ENCODE measurements at regions of chr9 and their contacts with region 1.

Region 1: GRCh38 chr9:84583866-84584265 is 85.7 kb upstream of the NTRK2 start:
- DNase-seq: no peak
- ATAC-seq: no peak
- H3K4me3 ChIP-seq: no peak overlapping the region
- H3K4me3 Mint-ChIP-seq: no peak overlapping the region
- H3K27ac ChIP-seq: no peak overlapping the region
- H3K27ac Mint-ChIP-seq: no peak overlapping the region
- H3K4me1 ChIP-seq: no peaks in the 10 kb centered on the region
- H3K4me1 Mint-ChIP-seq: no peaks in the 10 kb centered on the region
- H3K27me3 ChIP-seq: no peaks in the 10 kb centered on the region
- H3K27me3 Mint-ChIP-seq: no peaks in the 10 kb centered on the region
- CTCF ChIP-seq: no peak

Region 2: GRCh38 chr9:84521208-84521607 is 62.7 kb before region 1 on chr9:
- CTCF ChIA-PET with region 1: no interaction called
- POLR2A ChIA-PET with region 1: no interaction called
- intact Hi-C with region 1: no loop called
- DNase-seq: no peak
- ATAC-seq: no peak
- H3K4me3 ChIP-seq: no peak overlapping the region
- H3K4me3 Mint-ChIP-seq: no peak overlapping the region
- H3K27ac ChIP-seq: no peak overlapping the region
- H3K27ac Mint-ChIP-seq: no peak overlapping the region
- H3K4me1 ChIP-seq: no peaks in the 10 kb centered on the region
- H3K4me1 Mint-ChIP-seq: no peaks in the 10 kb centered on the region
- H3K27me3 ChIP-seq: no peaks in the 10 kb centered on the region
- H3K27me3 Mint-ChIP-seq: no peaks in the 10 kb centered on the region
- CTCF ChIP-seq: no peak

Region 3: DNA sequence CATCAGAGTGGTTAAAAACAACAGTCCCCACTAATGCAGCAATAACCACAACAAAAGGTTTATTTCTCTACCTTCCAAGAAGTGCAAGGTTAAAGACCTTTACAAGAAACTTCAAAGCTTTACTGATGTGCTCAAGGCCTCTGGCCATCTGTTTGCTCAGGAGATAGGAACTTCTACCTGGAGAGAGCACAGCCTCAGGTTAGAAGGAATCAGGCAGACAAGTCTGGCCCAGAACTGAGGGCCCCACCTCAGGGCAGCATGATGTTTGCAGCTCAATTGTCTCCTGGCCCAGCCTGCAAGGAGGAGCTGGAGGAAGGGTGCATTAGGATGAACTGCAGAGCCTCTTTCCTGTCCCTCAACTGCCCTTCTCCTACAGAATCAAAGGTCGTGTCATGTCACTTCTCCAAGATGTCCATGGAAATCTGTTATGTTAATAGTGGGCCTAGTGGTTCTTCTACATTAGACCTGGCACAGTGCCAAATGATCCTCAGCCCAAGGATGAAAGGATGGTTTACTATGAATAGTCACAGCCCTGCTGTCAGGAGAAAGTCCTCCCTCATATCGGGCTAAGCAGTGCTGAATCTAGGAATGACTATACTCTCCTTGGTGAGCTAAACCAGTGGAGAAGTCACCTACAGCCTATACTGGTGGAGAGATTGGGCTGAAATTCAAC is 13.2 kb before region 1 on chr9:
- CTCF ChIA-PET with region 1: no interaction called
- POLR2A ChIA-PET with region 1: no interaction called
- intact Hi-C with region 1: loop called in 1 of 2 experiments (anchors 1 kb)
- DNase-seq: no peak
- ATAC-seq: no peak
- H3K4me3 ChIP-seq: no peak overlapping the region
- H3K4me3 Mint-ChIP-seq: no peak overlapping the region
- H3K27ac ChIP-seq: no peak overlapping the region
- H3K27ac Mint-ChIP-seq: no peak overlapping the region
- H3K4me1 ChIP-seq: no peaks in the 10 kb centered on the region
- H3K4me1 Mint-ChIP-seq: no peaks in the 10 kb centered on the region
- H3K27me3 ChIP-seq: no peaks in the 10 kb centered on the region
- H3K27me3 Mint-ChIP-seq: no peaks in the 10 kb centered on the region
- CTCF ChIP-seq: no peak

Measured in CD8-positive, alpha-beta T cell (primary cell).